ENCODE measurements at regions of chr9 and their contacts with region 1.

Region 1: DNA sequence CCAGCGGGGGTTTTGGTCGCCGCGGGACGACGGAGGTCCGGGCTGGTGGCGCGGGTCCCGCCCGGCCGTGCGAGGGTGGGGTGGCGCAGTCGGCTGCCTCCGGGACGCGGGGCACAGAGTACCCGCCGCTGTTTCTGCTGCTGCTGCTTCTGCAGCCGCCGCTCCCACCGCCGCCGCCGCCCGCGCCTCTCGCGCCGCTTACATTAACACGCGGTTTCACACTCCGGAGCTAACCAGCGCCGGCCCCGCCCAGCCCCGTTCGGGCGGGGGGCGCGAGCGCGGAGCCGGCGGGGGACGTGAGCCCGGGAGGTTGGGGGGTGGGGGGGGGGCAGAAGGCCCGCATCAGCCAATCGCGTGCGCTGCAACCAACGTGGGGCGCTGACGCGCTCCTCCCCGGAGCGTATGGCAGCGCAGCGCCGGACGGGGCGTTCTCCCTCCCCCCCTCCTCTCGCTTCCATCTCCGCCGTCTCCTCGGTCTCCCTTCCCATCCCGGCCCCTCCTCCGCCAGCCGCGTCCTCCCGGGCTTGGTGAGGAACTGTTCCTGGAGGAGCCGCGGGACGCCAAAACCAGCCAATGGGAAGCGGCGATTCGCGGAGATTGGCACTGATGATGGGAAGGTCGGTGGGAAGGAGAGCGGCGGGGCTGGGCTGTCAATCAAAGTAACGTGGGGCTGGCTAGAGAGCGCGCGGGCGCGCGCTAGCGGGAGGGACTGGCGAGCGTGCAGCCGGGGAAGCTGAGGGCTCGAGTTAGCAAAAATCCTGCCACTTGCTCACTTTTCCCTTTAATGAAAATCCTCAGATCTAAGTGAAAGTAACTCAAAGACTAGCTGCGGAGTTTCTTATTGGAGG is at the start of gene TLE1:
- DNase-seq: peak; percentile 99 to 100 (median 99)
- ATAC-seq: peak; percentile 88
- H3K4me3 ChIP-seq: peak within 1 kb of the TSS; percentile 52
- H3K4me1 ChIP-seq: peaks cover 21% of the 10 kb centered on the region
- CTCF ChIP-seq: no peak
- total RNA-seq, gene TLE1: 42.9 to 51.8 (median 47.3) TPM

Region 2: DNA sequence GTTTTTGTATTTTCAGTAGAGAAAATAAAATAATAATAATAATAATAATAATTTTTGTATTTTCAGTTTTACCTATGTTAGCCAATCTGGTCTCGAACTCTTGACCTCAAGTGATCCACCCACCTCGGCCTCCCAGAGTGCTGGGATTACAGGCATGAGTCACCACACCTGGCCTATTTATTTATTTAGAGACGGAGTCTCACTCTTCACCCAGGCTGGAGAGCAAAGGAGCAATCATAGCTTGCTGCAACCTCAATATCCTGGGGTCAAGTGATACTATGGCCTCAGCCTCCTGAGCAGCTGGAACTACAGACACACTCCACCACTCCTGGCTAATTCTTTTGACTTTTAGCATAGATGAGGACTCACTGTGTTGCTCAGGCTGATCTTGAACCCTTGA is 167.7 kb before region 1 on chr9:
- intact Hi-C with region 1: loop called (anchors 2 to 10 kb)
- DNase-seq: no peak
- ATAC-seq: peak; percentile 50
- H3K4me3 ChIP-seq: no peak overlapping the region
- H3K4me1 ChIP-seq: no peaks in the 10 kb centered on the region
- CTCF ChIP-seq: no peak

Region 3: GRCh38 chr9:81529556-81530195 is 159.9 kb before region 1 on chr9:
- intact Hi-C with region 1: loop called in 1 of 2 experiments (anchors 10 kb)
- DNase-seq: no peak
- ATAC-seq: peak; percentile 79
- H3K4me3 ChIP-seq: no peak overlapping the region
- H3K4me1 ChIP-seq: no peaks in the 10 kb centered on the region
- CTCF ChIP-seq: no peak

Region 4: DNA sequence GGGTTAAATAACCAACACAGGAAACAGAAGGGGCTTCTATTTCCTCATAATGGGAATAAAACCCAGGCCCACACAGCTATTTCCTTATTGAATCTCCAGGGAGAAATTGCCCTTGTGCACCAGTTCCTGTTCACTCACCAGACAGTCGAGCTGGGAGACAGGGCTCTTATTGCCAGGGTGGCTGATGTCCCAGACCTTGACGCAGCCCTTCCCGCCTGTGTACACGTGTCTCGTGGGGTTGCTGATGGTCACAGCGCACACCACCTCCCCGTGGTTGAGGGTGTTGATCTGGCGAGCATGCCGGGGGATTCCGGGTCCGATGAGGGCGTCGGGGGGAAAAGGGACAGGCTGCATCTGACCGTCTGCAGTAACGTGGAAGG is 96.7 kb before region 1 on chr9:
- intact Hi-C with region 1: loop called in 1 of 2 experiments (anchors 5 kb)
- DNase-seq: peak; percentile 75 to 82 (median 79)
- ATAC-seq: peak; percentile 79
- H3K4me3 ChIP-seq: no peak overlapping the region
- H3K4me1 ChIP-seq: peaks cover 16% of the 10 kb centered on the region
- CTCF ChIP-seq: no peak

Region 5: DNA sequence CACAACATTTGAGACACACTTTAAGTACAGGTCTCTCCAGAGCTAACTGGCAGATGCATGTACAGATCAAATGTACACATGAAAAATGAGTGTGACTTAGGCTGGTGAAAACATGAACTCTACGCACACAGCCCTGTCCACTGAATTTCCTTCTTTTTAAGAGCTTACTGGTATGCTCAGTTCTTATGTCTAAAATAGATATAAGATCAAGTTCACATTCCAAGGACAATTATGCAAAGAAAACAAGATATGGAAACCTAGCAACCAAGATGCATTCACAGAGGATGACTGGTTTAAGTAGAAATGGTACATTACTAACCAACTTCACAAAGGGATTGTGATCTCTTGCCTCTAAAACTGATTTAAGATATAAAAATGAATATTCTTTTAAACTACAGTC is 57.0 kb before region 1 on chr9:
- intact Hi-C with region 1: no loop called
- DNase-seq: no peak
- ATAC-seq: no peak
- H3K4me3 ChIP-seq: no peak overlapping the region
- H3K4me1 ChIP-seq: no peaks in the 10 kb centered on the region
- CTCF ChIP-seq: no peak

Measured in mucosa of descending colon (tissue), 3 donors.